Naive thymus-derived CD4-positive, alpha-beta T cell (primary cell): ENCODE measurements at regions of chr6 and their contacts with region 1.

Region 1: GRCh38 chr6:15349379-15349778 is 103.5 kb downstream of the JARID2 start:
- DNase-seq: no peak
- ATAC-seq: no peak
- H3K4me3 ChIP-seq: no peak overlapping the region
- H3K4me3 Mint-ChIP-seq: peak overlapping the region in 2 of 10 donors; percentile 37 to 53
- H3K27ac ChIP-seq: no peak overlapping the region
- H3K27ac Mint-ChIP-seq: peak overlapping the region in 6 of 9 donors; percentile 22 to 89 (median 62)
- H3K4me1 ChIP-seq: peaks cover 14 to 58% of the 10 kb centered on the region in 2 donors
- H3K4me1 Mint-ChIP-seq: peaks cover 58 to 98% (median 89%) of the 10 kb centered on the region in 7 donors
- H3K27me3 ChIP-seq: no peaks in the 10 kb centered on the region
- H3K27me3 Mint-ChIP-seq: no peaks in the 10 kb centered on the region

Region 2: GRCh38 chr6:15365273-15365687 is 15.9 kb after region 1 on chr6:
- CTCF ChIA-PET with region 1: no interaction called
- POLR2A ChIA-PET with region 1: interaction called, 3 read pairs
- intact Hi-C with region 1: loop called in 1 of 2 experiments (anchors 2 kb)
- DNase-seq: peak in 8 of 9 donors; percentile 37 to 75 (median 70)
- ATAC-seq: peak; percentile 82
- H3K4me3 ChIP-seq: no peak overlapping the region
- H3K4me3 Mint-ChIP-seq: peak overlapping the region; percentile 46 to 85 (median 75)
- H3K27ac ChIP-seq: no peak overlapping the region
- H3K27ac Mint-ChIP-seq: peak overlapping the region in 8 of 9 donors; percentile 20 to 86 (median 74)
- H3K4me1 ChIP-seq: peaks cover 17 to 29% of the 10 kb centered on the region in 2 donors
- H3K4me1 Mint-ChIP-seq: peaks cover 0 to 35% (median 26%) of the 10 kb centered on the region in 7 donors
- H3K27me3 ChIP-seq: no peaks in the 10 kb centered on the region
- H3K27me3 Mint-ChIP-seq: no peaks in the 10 kb centered on the region